HEK293T (cell line): ENCODE measurements at regions of chr5 and their contacts with region 1.

Region 1: GRCh38 chr5:142235055-142235797 is 89.6 kb downstream of the SPRY4 start:
- DNase-seq: no peak

Region 2: DNA sequence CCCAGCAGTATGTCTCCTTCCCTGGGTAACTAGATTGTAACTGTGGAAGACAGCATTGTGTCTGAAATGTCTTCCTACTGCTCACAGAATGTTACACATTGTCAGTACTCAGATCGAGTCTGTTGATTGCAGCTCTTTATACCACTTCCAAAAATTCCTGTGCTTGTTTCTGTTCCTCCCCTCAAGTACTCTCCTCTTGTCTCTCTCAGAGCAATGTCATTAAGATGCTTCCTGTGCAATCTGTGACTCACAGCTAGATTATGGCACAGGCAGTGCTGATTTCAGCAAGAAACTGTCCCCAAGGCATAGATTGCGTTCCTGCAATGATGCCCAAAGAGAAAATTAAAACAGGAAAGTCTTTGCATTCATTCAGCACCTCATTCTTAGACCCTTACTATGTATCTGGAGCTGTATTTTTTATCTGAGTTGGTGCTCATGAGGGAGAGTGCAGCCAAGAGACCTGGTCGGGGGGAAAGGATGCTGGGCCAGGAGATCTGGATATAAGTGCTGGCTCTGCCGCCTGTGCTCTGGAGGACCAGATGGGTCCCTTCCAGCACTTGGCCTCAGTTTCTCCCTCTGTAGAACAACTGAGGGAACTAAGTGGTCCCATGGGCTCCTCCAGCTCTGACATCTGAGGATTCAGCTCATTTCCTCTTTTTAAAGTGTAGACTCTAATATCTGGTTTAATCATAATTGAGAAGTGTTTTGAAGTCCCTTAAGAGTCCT is 181.6 kb before region 1 on chr5:
- CTCF ChIA-PET with region 1: no interaction called
- POLR2A ChIA-PET with region 1: no interaction called
- DNase-seq: no peak

Region 3: DNA sequence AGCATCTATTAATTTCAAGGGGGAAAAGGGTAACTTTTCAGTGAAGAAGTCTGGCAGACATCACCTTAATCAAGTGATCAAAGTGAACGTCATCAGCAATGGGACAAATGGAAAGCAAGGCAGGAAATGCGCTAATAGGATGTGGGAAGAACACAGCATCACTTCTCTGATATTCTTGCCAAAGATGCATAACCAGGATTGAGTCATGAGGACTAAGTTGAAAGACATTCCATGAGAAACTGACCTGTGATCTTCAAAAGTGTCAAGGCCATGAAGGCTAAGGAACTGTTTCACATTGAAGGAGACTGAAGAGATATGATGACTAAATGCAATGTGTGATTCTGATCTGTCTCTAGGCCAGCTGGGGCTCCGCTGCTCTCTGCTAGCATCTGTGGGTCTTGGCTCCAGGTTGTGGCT is 33.7 kb before region 1 on chr5:
- CTCF ChIA-PET with region 1: no interaction called
- POLR2A ChIA-PET with region 1: no interaction called
- DNase-seq: no peak

Region 4: GRCh38 chr5:142222866-142223558 is 12.2 kb before region 1 on chr5:
- CTCF ChIA-PET with region 1: interaction called, 10 read pairs
- POLR2A ChIA-PET with region 1: no interaction called
- DNase-seq: no peak

Region 5: DNA sequence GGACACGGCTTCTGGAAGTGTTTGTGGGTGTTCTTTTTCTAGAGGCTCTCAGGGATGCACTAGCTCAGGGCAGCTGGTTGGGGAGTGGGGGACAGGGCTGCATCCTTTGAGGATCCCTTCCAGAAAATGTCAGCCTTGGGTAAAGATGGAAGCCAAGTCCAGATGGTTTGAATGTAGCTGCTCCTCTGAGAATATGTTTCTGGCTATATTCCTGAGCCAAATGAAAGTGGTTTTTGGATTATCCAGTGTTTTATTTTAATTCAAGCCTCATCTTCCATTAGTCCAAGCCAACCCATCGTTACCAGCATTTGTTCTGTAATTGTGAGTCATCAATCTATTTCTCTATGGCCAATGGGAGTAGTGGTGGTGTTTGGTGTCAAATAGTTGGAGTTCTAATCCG is 19.2 kb after region 1 on chr5:
- CTCF ChIA-PET with region 1: no interaction called
- POLR2A ChIA-PET with region 1: no interaction called
- DNase-seq: no peak

Region 6: DNA sequence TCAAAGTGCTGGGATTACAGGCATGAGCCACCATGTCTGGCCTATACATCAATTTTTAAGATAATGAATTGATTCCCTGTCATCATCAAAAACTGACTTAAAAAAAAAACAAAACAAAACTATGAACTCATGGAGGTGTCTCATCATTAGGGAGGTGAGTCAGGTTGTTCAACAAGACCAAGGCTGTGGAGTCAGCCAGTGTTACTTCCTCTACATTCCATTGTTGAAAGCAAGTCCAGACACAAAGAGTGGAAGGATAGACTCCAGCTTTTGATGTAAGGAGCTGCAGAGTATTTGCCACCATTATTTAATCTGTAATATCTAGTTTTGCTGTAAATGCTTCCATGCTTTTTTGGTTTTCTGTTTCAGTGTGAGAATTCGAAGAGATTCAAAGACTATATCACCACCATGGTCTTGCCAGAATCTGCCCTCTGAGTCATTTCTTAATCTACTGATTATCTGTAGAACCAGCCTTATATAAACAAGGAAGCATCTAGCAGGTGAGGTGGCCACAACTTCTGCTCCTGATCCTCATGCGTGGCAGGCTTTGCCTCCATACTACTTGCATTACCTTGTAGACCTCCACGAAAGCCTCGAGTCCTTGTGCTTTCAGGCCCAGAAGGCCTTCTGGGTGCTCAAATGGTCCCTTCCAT is 294.5 kb after region 1 on chr5:
- CTCF ChIA-PET with region 1: no interaction called
- POLR2A ChIA-PET with region 1: no interaction called
- DNase-seq: no peak